ENCODE measurements at regions of chr5 and their contacts with region 1.

Region 1: GRCh38 chr5:148730943-148731861 is 76.9 kb upstream of the HTR4 start:
- DNase-seq: peak; percentile 74

Region 2: GRCh38 chr5:148957591-148958202 is 226.5 kb after region 1 on chr5:
- in situ Hi-C with region 1: loop called (anchors 10 kb)
- DNase-seq: peak; percentile 55

Region 3: DNA sequence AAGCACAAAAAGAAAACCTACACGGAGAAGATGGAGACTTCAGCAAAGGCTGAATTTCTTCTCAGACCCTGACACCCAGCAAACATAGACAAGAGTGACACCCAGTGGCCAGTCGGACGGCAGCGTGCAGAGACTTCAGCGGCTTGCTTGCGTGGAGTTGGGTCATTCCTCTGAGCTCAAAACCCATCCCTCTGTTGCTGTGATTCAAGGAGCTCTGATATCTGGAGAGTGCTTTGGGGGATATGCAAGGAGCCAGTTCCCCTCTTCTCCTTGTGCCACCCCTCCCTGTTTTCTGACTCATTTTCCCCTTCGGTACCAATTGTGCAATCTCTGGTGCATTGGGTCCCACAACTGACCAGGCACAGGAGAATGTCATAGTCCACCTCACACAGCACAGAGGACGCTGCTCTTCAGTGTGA is 304.2 kb after region 1 on chr5:
- in situ Hi-C with region 1: loop called (anchors 25 kb)
- DNase-seq: peak; percentile 83

Region 4: GRCh38 chr5:149114403-149115312 is 383.5 kb after region 1 on chr5:
- in situ Hi-C with region 1: loop called (anchors 25 kb)
- DNase-seq: peak; percentile 72

Region 5: DNA sequence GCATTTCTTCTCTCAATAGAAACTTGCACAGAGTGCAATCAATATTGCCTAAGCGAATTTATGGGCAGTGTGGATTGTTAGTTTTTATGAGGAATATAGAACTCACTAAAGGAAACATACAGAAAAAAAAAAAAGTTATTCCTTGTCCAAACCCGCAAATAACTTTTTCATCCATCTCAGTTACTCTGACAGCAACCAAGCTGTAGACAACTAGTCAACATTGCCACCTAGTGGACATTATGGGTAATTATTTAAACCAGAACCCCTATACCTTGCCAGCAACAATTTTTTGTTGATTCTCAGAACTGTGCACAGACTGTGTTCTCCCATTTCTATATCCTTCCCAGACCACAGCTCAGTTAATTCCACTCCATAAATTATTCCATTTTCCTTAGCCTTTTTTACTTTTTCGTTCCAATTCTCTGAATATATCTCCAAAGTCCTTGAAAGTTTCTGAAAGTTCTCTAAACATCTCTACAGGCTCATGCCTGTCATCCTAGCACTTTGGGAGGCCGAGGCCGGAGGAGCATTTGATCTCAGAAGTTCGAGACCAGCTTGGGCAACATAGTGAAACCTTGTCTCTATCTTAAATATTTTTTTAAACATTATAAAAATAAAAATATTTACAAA is 537.8 kb after region 1 on chr5:
- in situ Hi-C with region 1: loop called (anchors 25 kb)
- DNase-seq: peak; percentile 65